Activated CD8-positive, alpha-beta T cell treated with anti-CD3 and anti-CD28 coated beads for 36 hours (primary cell): ENCODE measurements at regions of chr4 and their contacts with region 1.

Region 1: GRCh38 chr4:73573794-73574406 is 46.3 kb downstream of the RASSF6 start:
- DNase-seq: peak; percentile 51
- ATAC-seq: peak; percentile 47
- H3K4me3 Mint-ChIP-seq: no peak overlapping the region
- H3K27ac Mint-ChIP-seq: no peak overlapping the region
- H3K4me1 Mint-ChIP-seq: no peaks in the 10 kb centered on the region
- H3K27me3 Mint-ChIP-seq: no peaks in the 10 kb centered on the region
- CTCF ChIP-seq: peak; percentile 52

Region 2: DNA sequence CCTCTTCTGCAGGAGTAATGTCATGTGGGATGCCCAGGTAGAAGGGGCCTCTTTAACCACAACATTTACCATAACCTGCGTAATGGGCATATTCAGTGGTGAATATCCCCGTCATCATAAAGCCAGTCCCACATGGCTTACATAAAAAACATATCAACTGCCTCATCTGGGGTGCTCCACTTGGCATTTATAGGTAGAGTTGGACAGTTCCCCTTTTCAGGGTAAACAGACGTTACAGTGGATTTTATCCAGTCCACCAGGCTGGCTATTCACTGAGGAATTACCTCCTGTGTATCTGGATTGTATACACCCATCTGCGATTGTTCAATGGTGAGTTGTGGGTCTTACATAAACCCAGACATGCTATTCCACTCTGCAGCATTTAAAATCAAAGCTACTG is 244.6 kb before region 1 on chr4:
- CTCF ChIA-PET with region 1: no interaction called
- POLR2A ChIA-PET with region 1: no interaction called
- intact Hi-C with region 1: no loop called
- DNase-seq: no peak
- ATAC-seq: no peak
- H3K4me3 Mint-ChIP-seq: no peak overlapping the region
- H3K27ac Mint-ChIP-seq: no peak overlapping the region
- H3K4me1 Mint-ChIP-seq: no peaks in the 10 kb centered on the region
- H3K27me3 Mint-ChIP-seq: no peaks in the 10 kb centered on the region
- CTCF ChIP-seq: no peak

Region 3: DNA sequence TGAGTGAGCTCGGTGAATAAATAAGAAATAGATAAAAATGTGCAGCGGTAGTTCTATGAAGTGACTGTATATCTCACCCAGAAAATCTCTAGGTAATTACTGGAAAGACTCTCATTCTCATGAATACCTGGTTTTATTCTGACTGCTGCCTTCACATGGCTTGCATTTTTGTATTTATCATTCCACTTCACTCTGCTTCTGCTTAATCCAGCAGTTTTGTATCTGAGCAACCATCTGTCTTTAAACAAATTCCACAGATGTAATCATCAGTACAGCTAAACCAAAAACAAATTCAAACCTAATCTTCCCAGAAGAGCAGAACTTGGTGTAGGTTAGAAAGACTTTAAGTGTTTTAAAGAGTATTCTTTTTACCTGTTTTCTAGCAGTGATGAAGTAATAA is 181.0 kb before region 1 on chr4:
- CTCF ChIA-PET with region 1: no interaction called
- POLR2A ChIA-PET with region 1: no interaction called
- intact Hi-C with region 1: no loop called
- DNase-seq: no peak
- ATAC-seq: no peak
- H3K4me3 Mint-ChIP-seq: no peak overlapping the region
- H3K27ac Mint-ChIP-seq: no peak overlapping the region
- H3K4me1 Mint-ChIP-seq: no peaks in the 10 kb centered on the region
- H3K27me3 Mint-ChIP-seq: peaks cover 4% of the 10 kb centered on the region
- CTCF ChIP-seq: no peak

Region 4: GRCh38 chr4:73653695-73654106 is 79.8 kb after region 1 on chr4:
- CTCF ChIA-PET with region 1: interaction called, 5 read pairs
- POLR2A ChIA-PET with region 1: no interaction called
- intact Hi-C with region 1: loop called (anchors 5 kb)
- DNase-seq: peak; percentile 8
- ATAC-seq: no peak
- H3K4me3 Mint-ChIP-seq: no peak overlapping the region
- H3K27ac Mint-ChIP-seq: no peak overlapping the region
- H3K4me1 Mint-ChIP-seq: no peaks in the 10 kb centered on the region
- H3K27me3 Mint-ChIP-seq: peaks cover 2% of the 10 kb centered on the region
- CTCF ChIP-seq: peak; percentile 87